Activated CD8-positive, alpha-beta T cell treated with anti-CD3 and anti-CD28 coated beads for 36 hours (primary cell): ENCODE measurements at regions of chr3 and their contacts with region 1.

Region 1: GRCh38 chr3:13479581-13480339 is at the start of gene HDAC11:
- DNase-seq: peak; percentile 98
- ATAC-seq: peak; percentile 97
- H3K4me3 Mint-ChIP-seq: peak within 1 kb of the TSS; percentile 90
- H3K27ac Mint-ChIP-seq: peak within 1 kb of the TSS; percentile 89
- H3K4me1 Mint-ChIP-seq: peaks cover 20% of the 10 kb centered on the region
- H3K27me3 Mint-ChIP-seq: no peaks in the 10 kb centered on the region
- CTCF ChIP-seq: no peak
- total RNA-seq, gene HDAC11: 1.8 to 2.0 TPM

Region 2: DNA sequence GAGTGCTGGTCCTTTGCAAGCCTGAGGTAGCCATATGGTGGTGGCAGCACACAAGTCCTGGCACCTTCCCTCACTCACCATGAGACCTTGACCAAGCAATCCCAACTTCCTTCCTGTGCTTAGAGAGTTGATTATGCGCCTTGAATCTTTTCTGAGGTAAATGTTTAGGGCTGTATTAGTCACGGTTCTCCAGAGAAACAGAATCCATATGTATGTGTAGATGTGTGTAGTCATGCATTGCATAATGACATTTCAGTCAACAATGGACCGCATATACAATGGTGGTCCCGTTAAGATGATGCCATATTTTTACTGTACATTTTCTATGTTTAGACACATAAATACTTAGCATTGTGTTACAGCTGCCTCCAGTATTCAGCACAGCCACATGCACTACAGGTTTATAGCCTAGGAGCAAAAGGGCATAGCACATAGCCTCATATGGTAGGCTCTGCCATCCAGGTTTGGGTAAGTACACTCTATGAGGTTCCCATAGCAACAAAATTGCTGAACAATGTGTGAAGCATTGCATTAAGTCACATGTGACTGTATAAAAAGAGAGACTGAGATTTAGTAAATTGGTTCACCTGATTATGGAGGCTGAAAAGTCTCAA is 39.4 kb before region 1 on chr3:
- CTCF ChIA-PET with region 1: no interaction called
- POLR2A ChIA-PET with region 1: no interaction called
- intact Hi-C with region 1: no loop called
- DNase-seq: no peak
- ATAC-seq: no peak
- H3K4me3 Mint-ChIP-seq: no peak overlapping the region
- H3K27ac Mint-ChIP-seq: no peak overlapping the region
- H3K4me1 Mint-ChIP-seq: no peaks in the 10 kb centered on the region
- H3K27me3 Mint-ChIP-seq: no peaks in the 10 kb centered on the region
- CTCF ChIP-seq: no peak

Region 3: DNA sequence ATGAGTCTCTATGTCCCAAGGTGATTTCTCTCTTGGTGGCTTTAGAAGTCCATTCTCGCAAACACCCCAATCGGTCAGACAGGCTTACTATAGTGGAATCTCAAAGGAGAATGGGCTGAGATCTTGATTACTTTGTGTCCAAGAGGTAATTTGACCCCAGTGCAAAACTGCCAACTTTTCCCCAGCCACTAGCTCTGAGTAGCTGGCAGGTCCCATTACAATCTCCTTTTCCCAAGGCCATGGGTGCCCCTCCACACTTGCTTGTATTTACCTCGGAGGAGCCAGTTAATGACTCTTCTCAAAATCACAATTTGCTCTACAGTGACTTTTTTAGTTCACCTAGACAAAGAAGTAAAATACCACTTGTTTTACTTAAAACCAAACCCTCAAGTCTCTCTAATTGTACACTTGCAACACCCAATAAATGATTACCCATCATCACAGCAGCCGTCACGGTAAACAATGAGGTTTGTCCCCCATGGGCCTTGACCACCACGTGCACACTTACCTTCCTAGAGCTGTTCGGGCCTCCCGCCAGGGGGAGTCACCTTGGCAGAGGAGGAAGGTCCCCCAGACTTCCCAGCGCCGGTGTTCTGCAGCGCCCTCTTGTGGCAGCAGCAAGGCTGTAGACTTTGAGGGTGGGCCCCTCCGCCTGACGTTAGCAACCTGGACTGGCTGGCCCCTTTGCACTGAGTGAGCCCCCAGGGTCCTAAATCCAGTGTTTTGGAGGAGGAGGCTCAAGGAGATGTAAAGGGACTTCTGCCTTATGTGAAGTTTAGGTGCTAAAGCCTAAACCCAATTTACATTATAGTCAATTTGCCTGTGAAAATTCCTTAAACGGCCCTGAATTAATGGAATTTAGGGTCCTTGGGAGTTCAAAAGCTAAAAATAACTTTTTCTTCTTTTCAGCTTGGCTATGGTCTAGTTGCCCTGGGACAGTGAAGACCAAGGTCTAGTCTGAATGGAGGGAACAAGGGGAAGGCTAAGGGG is 18.3 kb before region 1 on chr3:
- CTCF ChIA-PET with region 1: interaction called, 37 read pairs
- POLR2A ChIA-PET with region 1: interaction called, 3 read pairs
- intact Hi-C with region 1: no loop called
- DNase-seq: peak; percentile 86
- ATAC-seq: peak; percentile 100
- H3K4me3 Mint-ChIP-seq: no peak overlapping the region
- H3K27ac Mint-ChIP-seq: no peak overlapping the region
- H3K4me1 Mint-ChIP-seq: no peaks in the 10 kb centered on the region
- H3K27me3 Mint-ChIP-seq: peaks cover 1% of the 10 kb centered on the region
- CTCF ChIP-seq: peak; percentile 97

Region 4: GRCh38 chr3:13600941-13601576 is 121.3 kb after region 1 on chr3:
- CTCF ChIA-PET with region 1: no interaction called
- POLR2A ChIA-PET with region 1: no interaction called
- intact Hi-C with region 1: no loop called
- DNase-seq: no peak
- ATAC-seq: no peak
- H3K4me3 Mint-ChIP-seq: no peak overlapping the region
- H3K27ac Mint-ChIP-seq: no peak overlapping the region
- H3K4me1 Mint-ChIP-seq: no peaks in the 10 kb centered on the region
- H3K27me3 Mint-ChIP-seq: no peaks in the 10 kb centered on the region
- CTCF ChIP-seq: no peak